CD4-positive, alpha-beta memory T cell (primary cell): ENCODE measurements at regions of chr3 and their contacts with region 1.

Region 1: DNA sequence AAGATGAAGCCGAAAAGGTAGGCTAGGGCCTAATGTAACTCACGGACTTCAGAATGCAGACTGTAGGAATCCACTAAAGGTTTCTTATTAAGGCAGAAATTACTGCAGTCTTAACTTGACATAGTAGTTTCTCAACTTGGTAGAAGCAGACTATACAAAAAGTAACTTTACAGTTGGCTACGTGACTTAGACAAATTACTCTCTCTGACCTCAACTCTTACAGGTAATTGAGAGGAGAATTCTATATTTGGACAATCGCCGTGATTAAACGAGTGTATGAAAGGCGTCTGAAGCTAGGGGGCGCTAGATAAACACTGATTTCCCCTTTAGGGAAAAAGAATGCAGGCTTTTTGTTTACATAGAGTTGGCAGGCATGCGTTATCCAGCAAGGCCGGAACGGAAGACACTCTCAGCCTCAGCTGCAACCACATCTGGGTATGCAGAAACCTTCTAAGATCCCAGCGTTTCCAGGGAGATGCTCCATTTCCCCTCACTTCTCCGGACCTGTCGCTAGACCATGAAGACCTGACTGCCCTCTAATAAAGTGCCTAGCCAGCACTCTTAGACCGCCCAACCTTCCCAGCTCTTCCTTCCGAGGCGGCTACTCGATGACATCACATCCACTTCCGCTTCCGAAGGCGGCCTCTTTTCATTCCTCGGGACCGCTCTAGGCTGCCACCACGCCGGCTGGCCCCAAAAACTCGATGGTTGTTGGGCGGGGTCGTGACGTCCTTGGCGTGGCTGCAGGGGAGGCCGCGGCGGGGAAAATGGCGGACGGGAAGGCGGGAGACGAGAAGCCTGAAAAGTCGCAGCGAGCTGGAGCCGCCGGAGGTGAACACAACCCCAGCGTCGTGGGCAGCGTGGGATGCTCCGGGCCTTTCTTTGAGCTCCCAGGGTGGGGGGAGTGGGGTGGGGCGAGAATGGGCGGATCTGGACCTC is at the start of gene PCNP:
- DNase-seq: peak; percentile 98 to 99 (median 99)
- H3K4me3 ChIP-seq: peak within 1 kb of the TSS; percentile 72 to 91
- H3K4me3 Mint-ChIP-seq: peak within 1 kb of the TSS; percentile 92 to 99 (median 97)
- H3K27ac ChIP-seq: peak within 1 kb of the TSS; percentile 98
- H3K27ac Mint-ChIP-seq: peak within 1 kb of the TSS; percentile 95 to 100 (median 99)
- H3K4me1 ChIP-seq: peaks cover 63% of the 10 kb centered on the region
- H3K4me1 Mint-ChIP-seq: peaks cover 46 to 78% (median 62%) of the 10 kb centered on the region in 4 donors
- H3K27me3 ChIP-seq: no peaks in the 10 kb centered on the region
- H3K27me3 Mint-ChIP-seq: no peaks in the 10 kb centered on the region
- total RNA-seq, gene PCNP: 172 to 189 TPM

Region 2: DNA sequence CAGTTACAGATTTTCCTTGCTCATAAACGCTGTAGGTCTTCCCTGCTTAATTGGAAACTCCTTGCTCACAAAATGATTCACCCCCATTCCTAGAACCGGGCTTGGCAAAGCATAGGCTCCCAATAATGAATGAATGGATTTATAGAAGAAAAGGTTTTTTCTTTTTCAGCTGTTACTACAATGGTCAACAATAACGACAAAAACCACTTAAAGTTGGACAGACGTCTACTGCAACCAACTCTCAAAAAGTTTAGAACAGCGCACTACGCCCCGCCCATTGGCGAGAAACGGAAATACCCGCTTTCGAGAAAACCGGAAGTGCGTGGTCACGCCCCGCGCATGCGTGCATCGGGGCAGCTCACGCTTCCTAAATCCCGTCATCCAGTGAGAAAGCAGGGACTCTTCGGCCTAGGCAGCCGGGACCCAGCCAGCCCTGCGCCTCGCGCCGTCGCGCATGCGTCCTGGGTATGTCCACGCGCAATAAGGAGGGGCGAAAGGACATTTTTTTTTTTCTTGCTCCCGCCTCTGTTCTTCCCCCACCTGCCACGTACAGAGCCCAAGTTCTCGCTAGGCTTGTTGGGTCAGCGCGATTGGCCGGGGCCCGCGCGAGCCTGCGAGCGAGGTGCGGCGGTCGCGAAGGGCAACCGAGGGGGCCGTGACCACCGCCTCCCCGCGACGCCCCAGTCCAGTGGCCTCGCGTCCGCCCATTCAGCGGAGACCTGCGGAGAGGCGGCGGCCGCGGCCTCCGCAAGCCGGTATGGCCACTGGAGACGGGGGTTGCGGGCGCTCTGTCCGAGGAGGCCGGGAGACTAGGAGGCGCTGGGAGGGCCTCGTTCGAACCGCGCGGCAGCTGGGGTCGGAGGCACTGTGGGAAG is 864.5 kb before region 1 on chr3 and contains the start of gene TFG:
- CTCF ChIA-PET with region 1: no interaction called
- POLR2A ChIA-PET with region 1: interaction called, 3 read pairs
- intact Hi-C with region 1: loop called (anchors 1 kb)
- DNase-seq: peak; percentile 96 to 98 (median 98)
- H3K4me3 ChIP-seq: peak within 1 kb of the TSS; percentile 67 to 70
- H3K4me3 Mint-ChIP-seq: peak within 1 kb of the TSS; percentile 88 to 94 (median 92)
- H3K27ac ChIP-seq: peak within 1 kb of the TSS; percentile 95
- H3K27ac Mint-ChIP-seq: peak within 1 kb of the TSS; percentile 96 to 99 (median 98)
- H3K4me1 ChIP-seq: peaks cover 39% of the 10 kb centered on the region
- H3K4me1 Mint-ChIP-seq: peaks cover 32 to 55% (median 38%) of the 10 kb centered on the region in 4 donors
- H3K27me3 ChIP-seq: no peaks in the 10 kb centered on the region
- H3K27me3 Mint-ChIP-seq: no peaks in the 10 kb centered on the region
- total RNA-seq, gene TFG: 42.3 to 44.9 TPM

Region 3: DNA sequence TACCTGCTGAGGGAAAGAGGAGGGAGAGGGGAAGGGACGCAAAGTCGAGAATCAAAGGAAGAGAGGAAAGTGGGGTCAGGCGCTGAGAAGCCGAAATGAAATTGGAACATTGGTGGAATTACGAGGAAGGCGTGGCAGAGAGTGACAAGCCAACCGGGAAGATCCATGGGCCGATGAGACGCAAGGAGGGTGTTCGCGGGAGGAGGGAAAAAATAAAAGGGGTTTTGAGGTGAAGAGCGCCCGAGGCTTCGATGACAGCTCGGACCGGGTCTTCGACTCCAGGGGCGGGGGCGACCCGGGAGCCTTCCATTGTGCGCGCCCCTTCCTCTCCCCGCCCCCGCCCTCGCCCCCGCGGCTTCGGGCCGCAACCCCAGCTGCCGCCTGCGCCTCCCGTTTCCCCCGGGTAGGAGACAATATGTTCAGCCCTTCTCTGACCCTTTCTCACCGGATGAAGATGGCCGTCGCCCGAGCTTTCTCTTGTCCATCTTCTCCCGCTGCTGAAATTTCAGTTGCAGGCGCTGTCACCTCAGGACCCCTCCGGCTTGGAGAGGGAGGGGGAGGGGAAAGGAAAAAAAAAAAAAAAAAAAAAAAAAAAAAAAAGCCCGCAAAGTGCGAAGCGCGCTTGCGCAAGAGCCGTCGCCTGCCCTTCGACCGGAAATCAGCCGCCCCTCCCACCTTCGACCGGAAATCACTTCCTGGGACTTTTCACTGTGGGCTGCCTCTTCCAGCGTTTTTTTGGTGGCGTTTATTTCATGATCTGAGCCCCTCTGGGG is 60.9 kb before region 1 on chr3 and contains the start of gene SENP7:
- CTCF ChIA-PET with region 1: interaction called, 28 read pairs
- POLR2A ChIA-PET with region 1: interaction called, 60 read pairs
- intact Hi-C with region 1: loop called (anchors 1 kb)
- DNase-seq: peak; percentile 75 to 81 (median 77)
- H3K4me3 ChIP-seq: peak within 1 kb of the TSS; percentile 83 to 88
- H3K4me3 Mint-ChIP-seq: peak within 1 kb of the TSS; percentile 98 to 100 (median 99)
- H3K27ac ChIP-seq: peak within 1 kb of the TSS; percentile 84
- H3K27ac Mint-ChIP-seq: peak within 1 kb of the TSS; percentile 98 to 100 (median 99)
- H3K4me1 ChIP-seq: peaks cover 54% of the 10 kb centered on the region
- H3K4me1 Mint-ChIP-seq: peaks cover 24 to 73% (median 51%) of the 10 kb centered on the region in 4 donors
- H3K27me3 ChIP-seq: no peaks in the 10 kb centered on the region
- H3K27me3 Mint-ChIP-seq: peaks cover 1 to 2% of the 10 kb centered on the region in 2 donors
- total RNA-seq, gene SENP7: 69.7 to 69.8 TPM

Region 4: GRCh38 chr3:101561630-101562328 is 11.9 kb before region 1 on chr3 and contains the start of gene TRMT10C:
- CTCF ChIA-PET with region 1: interaction called, 11 read pairs
- POLR2A ChIA-PET with region 1: interaction called, 56 read pairs
- intact Hi-C with region 1: loop called (anchors 1 kb)
- DNase-seq: peak; percentile 91 to 95 (median 93)
- H3K4me3 ChIP-seq: peak within 1 kb of the TSS; percentile 95 to 100
- H3K4me3 Mint-ChIP-seq: peak within 1 kb of the TSS; percentile 97 to 100 (median 99)
- H3K27ac ChIP-seq: peak within 1 kb of the TSS; percentile 79
- H3K27ac Mint-ChIP-seq: peak within 1 kb of the TSS; percentile 95 to 99 (median 99)
- H3K4me1 ChIP-seq: peaks cover 22% of the 10 kb centered on the region
- H3K4me1 Mint-ChIP-seq: peaks cover 13 to 41% (median 30%) of the 10 kb centered on the region in 4 donors
- H3K27me3 ChIP-seq: no peaks in the 10 kb centered on the region
- H3K27me3 Mint-ChIP-seq: peaks cover 4% of the 10 kb centered on the region in 2 donors
- total RNA-seq, gene TRMT10C: 23.3 to 24.8 TPM

Region 5: DNA sequence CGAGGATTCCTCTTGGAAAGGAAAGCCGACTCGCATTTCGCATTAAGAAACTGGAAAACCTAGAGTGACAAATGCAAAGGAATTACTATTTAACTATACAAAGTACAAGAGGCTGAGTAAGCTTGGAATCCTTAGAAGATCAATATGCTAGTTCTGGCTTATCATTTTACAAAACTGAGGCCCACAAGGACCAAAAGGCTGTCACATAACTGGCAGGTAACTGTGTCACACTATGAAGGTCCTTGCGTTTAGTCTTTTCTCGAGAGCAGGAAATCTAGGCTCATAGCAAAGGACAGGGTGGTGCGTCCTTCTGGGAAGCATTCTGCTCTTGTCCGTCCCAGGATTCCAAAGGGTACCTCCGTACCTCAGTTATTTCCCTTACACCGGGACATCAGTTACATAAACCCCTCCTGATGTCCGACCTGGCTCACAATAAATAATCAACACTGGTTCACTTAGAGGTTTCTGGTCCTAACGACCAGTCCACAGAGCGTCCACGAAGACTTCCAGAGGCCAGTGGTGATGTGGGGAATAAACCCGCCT is 112.2 kb after region 1 on chr3:
- CTCF ChIA-PET with region 1: interaction called, 9 read pairs
- POLR2A ChIA-PET with region 1: interaction called, 38 read pairs
- intact Hi-C with region 1: loop called (anchors 1 kb)
- DNase-seq: no peak
- H3K4me3 ChIP-seq: peak overlapping the region; percentile 73 to 97
- H3K4me3 Mint-ChIP-seq: peak overlapping the region; percentile 99 to 100 (median 100)
- H3K27ac ChIP-seq: peak overlapping the region; percentile 90
- H3K27ac Mint-ChIP-seq: peak overlapping the region; percentile 98 to 100 (median 99)
- H3K4me1 ChIP-seq: peaks cover 42% of the 10 kb centered on the region
- H3K4me1 Mint-ChIP-seq: peaks cover 20 to 53% (median 33%) of the 10 kb centered on the region in 4 donors
- H3K27me3 ChIP-seq: no peaks in the 10 kb centered on the region
- H3K27me3 Mint-ChIP-seq: no peaks in the 10 kb centered on the region

Region 6: GRCh38 chr3:101809178-101810021 is 235.7 kb after region 1 on chr3:
- CTCF ChIA-PET with region 1: no interaction called
- POLR2A ChIA-PET with region 1: no interaction called
- intact Hi-C with region 1: no loop called
- DNase-seq: peak; percentile 49 to 60 (median 55)
- H3K4me3 ChIP-seq: no peak overlapping the region
- H3K4me3 Mint-ChIP-seq: peak overlapping the region in 6 of 8 donors; percentile 22 to 43 (median 34)
- H3K27ac ChIP-seq: peak overlapping the region; percentile 29
- H3K27ac Mint-ChIP-seq: peak overlapping the region; percentile 43 to 90 (median 83)
- H3K4me1 ChIP-seq: peaks cover 28% of the 10 kb centered on the region
- H3K4me1 Mint-ChIP-seq: peaks cover 25 to 47% (median 30%) of the 10 kb centered on the region in 4 donors
- H3K27me3 ChIP-seq: no peaks in the 10 kb centered on the region
- H3K27me3 Mint-ChIP-seq: no peaks in the 10 kb centered on the region

Region 7: DNA sequence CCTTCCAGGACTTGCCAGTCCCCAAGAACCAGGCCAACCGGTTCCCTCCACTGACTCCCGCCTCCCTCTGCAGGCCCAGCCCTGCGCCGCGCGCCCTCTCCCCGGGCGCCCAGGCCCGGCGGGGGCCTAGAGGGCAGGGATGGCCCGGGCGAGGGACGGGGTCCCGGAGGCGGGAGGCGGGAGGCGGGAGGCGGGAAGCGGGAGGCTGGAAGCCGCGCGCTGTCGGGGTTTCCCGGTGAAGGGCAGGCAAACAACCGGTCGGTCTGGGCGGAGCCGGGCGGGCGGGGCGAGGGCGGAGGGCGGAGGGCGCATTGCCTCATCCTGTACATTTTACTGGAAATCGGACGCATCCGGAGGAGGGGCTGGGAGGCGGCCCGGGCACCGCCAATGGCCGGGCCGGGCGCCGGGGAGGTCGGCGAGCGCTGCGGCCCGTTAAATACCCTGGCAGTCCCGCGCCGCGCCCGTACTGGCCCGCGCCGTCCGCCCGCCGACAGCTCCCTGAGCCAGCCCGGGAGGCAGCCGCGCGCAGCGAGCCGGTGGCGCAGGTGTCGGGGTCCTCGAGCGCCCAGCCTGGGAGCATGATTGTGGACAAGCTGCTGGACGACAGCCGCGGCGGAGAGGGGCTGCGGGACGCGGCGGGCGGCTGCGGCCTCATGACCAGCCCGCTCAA is 275.5 kb after region 1 on chr3 and contains the start of gene NFKBIZ:
- CTCF ChIA-PET with region 1: no interaction called
- POLR2A ChIA-PET with region 1: interaction called, 7 read pairs
- intact Hi-C with region 1: loop called (anchors 1 kb)
- DNase-seq: peak; percentile 89 to 96 (median 91)
- H3K4me3 ChIP-seq: peak within 1 kb of the TSS; percentile 70 to 100
- H3K4me3 Mint-ChIP-seq: peak within 1 kb of the TSS; percentile 93 to 100 (median 98)
- H3K27ac ChIP-seq: peak within 1 kb of the TSS; percentile 99
- H3K27ac Mint-ChIP-seq: peak within 1 kb of the TSS; percentile 97 to 100 (median 99)
- H3K4me1 ChIP-seq: peaks cover 33% of the 10 kb centered on the region
- H3K4me1 Mint-ChIP-seq: peaks cover 26 to 56% (median 35%) of the 10 kb centered on the region in 4 donors
- H3K27me3 ChIP-seq: no peaks in the 10 kb centered on the region
- H3K27me3 Mint-ChIP-seq: no peaks in the 10 kb centered on the region
- total RNA-seq, gene NFKBIZ: 75.9 to 79.5 TPM

Region 8: GRCh38 chr3:102180291-102181039 is 606.7 kb after region 1 on chr3:
- CTCF ChIA-PET with region 1: no interaction called
- POLR2A ChIA-PET with region 1: no interaction called
- intact Hi-C with region 1: no loop called
- DNase-seq: peak in 2 of 5 donors; percentile 2 to 7
- H3K4me3 ChIP-seq: no peak overlapping the region
- H3K4me3 Mint-ChIP-seq: no peak overlapping the region
- H3K27ac ChIP-seq: no peak overlapping the region
- H3K27ac Mint-ChIP-seq: no peak overlapping the region
- H3K4me1 ChIP-seq: peaks cover 14% of the 10 kb centered on the region
- H3K4me1 Mint-ChIP-seq: peaks cover 2 to 6% (median 4%) of the 10 kb centered on the region in 4 donors
- H3K27me3 ChIP-seq: no peaks in the 10 kb centered on the region
- H3K27me3 Mint-ChIP-seq: peaks cover 0 to 2% of the 10 kb centered on the region in 2 donors